HEK293 (cell line): ENCODE measurements at regions of chr17 and their contacts with region 1.

Region 1: DNA sequence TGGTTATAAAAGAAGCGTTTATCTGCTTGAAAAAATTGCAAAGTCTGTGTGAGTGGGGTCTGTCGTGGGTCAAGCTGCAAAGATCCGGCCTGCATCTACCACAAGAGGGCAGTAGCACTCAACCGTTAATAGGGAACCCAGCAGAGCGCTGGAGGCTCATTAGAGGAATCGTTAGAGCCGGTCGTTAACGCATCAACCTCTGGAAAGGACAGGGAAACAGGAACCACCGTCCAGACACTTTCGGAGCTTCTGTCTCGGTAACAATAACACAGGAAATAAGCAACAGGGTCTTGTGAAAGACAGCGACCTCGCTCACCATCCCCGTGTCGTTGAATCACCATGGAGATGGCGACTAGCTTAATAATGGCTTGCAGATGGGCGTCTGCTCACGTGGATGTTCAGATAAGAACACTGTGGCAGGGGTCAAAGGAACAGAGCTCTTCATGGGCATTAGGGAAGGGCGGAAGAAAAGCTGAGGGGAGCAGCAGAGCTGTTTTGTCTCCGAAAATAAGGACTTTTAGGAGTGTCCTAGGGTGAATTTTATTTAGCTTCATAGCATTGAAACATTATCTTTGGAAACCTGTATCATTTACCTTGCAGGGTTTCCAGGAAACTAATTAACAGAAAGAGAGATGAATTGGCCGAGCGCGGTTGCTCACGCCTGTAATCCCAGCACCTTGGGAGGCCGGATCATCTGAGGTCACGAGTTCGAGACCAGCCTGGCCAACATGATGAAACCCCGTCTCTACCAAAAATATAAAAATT is 11.9 kb upstream of the NSRP1 start:
- H3K4me3 ChIP-seq: peak overlapping the region; percentile 40
- H3K27ac ChIP-seq: peak overlapping the region; percentile 26; the same call in 1 of the 2 replicates
- H3K4me1 ChIP-seq: no peaks in the 10 kb centered on the region
- CTCF ChIP-seq: peak; percentile 83

Region 2: DNA sequence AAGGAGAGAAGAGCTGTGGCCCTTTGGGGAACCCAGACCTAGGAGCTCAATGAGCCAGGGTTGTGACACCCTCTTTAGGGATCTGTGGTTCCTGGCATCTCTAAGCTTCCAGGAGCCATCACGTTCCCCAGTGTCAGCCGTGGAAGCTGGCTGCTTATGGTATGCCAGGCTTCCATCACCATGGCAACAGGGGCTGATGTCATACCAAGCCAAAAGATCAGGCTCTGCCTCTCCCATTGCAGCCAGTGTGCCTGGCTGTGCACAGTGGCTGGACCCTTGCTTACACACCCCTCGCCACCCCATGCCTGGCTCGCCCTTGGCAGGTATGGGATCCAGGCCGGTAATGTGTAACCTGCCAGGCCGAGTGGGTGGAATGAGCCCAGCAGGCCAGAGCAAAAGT is 265.8 kb before region 1 on chr17:
- CTCF ChIA-PET with region 1: no interaction called
- POLR2A ChIA-PET with region 1: no interaction called
- H3K4me3 ChIP-seq: no peak overlapping the region
- H3K27ac ChIP-seq: no peak overlapping the region
- H3K4me1 ChIP-seq: peaks cover 2% of the 10 kb centered on the region
- CTCF ChIP-seq: no peak

Region 3: DNA sequence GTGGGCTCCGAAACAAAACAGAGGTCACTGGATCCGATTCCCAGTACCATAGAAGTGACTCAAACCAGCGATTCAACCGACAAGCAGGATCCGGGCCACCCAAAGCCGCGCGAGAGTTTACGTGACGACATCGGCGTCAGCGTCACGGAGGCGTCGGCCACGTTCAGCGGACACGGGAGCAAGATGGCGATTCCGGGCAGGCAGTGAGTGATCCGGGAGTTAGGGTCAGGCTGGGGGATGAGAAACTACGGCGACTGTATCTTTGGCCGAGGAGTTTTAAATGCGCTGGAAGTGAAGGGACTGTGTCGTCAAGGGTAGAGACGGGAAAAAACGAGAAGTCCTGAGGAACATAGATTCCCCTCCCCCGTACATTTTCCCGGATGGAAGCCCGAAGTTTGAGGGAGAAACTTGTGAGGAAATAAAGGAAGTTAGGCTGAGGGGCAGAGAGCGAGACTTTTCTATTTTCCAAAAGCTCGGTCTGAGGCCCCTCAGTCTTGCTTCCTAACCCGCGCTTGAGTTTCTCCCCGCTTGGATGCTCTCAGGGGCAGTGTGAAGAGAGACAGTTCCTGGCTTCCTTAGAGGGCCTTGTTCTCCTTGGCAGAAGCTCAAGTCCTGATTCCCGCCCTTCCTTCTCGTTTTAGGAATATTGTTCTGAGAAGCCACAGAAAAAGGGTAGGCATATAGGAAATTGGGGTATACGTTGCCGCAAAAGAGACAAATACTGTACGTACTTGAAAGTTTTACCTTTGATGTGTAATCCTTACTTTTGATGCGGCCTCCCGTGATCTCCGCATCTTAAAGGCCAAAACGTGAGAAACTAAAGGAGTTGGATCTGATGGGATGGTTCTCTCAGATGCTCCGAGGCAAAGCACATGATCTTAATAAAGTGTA is 12.1 kb after region 1 on chr17 and contains the start of gene NSRP1:
- CTCF ChIA-PET with region 1: interaction called, 108 read pairs
- POLR2A ChIA-PET with region 1: interaction called, 8 read pairs
- H3K4me3 ChIP-seq: peak within 1 kb of the TSS; percentile 47
- H3K27ac ChIP-seq: peak within 1 kb of the TSS; percentile 95
- H3K4me1 ChIP-seq: peaks cover 11% of the 10 kb centered on the region
- CTCF ChIP-seq: no peak

Region 4: GRCh38 chr17:30161601-30162000 is 56.8 kb after region 1 on chr17:
- CTCF ChIA-PET with region 1: interaction called, 10 read pairs
- POLR2A ChIA-PET with region 1: interaction called, 5 read pairs
- H3K4me3 ChIP-seq: no peak overlapping the region
- H3K27ac ChIP-seq: no peak overlapping the region
- H3K4me1 ChIP-seq: no peaks in the 10 kb centered on the region
- CTCF ChIP-seq: no peak

Region 5: DNA sequence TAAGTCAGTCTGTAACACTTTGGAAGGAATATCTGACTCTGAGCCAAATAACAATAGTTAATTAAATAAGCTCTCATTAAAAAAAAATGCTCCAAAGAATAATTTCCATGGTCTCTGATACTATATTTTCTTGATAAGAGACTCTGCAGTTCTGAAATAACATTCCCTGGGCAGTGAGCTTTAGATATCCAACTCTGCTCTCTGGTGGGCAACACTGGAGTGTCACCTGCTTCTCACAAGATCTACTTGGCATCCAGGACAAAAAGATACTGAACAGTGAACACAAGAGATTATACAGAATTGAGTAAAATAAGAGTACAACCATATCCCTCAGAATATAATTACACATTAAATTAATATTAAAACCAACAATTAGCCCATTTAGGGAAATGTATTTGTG is 173.3 kb after region 1 on chr17:
- CTCF ChIA-PET with region 1: interaction called, 32 read pairs
- POLR2A ChIA-PET with region 1: no interaction called
- H3K4me3 ChIP-seq: no peak overlapping the region
- H3K27ac ChIP-seq: no peak overlapping the region
- H3K4me1 ChIP-seq: no peaks in the 10 kb centered on the region
- CTCF ChIP-seq: no peak

Region 6: DNA sequence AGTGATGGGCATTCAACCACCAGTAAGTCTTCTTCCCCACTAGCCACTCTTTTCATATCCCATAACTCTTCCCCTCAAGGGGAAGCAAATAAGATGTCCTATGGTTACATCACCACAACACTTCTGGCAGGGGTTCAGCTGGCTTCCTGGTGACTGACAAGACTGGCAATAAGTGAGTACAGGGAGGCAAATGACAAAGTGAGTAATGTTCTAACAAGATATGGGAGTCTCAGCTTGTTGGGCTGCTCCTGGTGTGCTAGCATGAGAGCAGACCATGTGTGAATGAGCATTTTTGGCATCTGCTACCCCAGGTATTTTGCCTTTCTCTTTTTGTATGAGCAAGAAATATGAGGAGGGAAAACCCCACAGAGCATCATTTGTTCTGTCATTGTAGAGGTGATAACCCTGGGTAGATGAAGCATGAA is 219.2 kb after region 1 on chr17:
- CTCF ChIA-PET with region 1: interaction called, 15 read pairs
- POLR2A ChIA-PET with region 1: interaction called, 3 read pairs
- H3K4me3 ChIP-seq: no peak overlapping the region
- H3K27ac ChIP-seq: no peak overlapping the region
- H3K4me1 ChIP-seq: 0 out of 2 replicates have a peak, but pooled peaks cover 3% of the 10 kb centered on the region
- CTCF ChIP-seq: no peak